Gastrocnemius medialis (tissue), 4 donors: ENCODE measurements at regions of chr17 and their contacts with region 1.

Region 1: DNA sequence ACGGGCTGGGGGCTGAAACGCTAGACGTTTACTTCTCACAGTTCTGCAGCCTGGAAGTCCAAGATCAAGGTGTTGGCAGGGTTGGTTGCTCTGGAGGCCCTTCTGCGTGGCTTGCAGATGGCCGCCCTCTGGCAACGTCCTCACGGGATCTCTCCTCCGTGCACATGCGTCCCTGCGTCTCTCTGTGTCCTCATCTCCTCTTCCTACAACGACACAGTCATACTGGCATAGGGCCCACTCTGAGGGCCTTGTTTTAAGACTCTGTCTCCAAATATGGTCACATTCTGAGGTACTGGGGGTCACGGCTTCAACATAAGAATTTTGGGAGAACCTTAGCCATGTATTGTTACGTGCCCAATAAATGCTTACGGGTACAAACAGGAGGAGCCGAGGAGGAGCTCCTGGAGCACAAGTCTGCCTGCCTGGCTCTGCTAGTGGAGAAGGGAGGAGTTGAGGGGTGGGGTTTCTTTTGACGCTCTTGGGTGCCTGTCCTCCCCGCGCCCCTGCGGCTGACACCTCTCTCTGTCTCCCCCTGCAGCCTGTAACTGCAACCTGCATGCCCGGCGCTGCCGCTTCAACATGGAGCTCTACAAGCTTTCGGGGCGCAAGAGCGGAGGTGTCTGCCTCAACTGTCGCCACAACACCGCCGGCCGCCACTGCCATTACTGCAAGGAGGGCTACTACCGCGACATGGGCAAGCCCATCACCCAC is 141.1 kb downstream of the NTN1 start:
- DNase-seq: peak in 1 of 2 donors; percentile 33
- ATAC-seq: no peak
- H3K4me3 ChIP-seq: no peak overlapping the region
- H3K27ac ChIP-seq: peak overlapping the region in 2 of 4 donors; percentile 58 to 72
- H3K4me1 ChIP-seq: no peaks in the 10 kb centered on the region
- H3K27me3 ChIP-seq: no peaks in the 10 kb centered on the region
- CTCF ChIP-seq: no peak
- POLR2A ChIP-seq: no peak

Region 2: GRCh38 chr17:9115446-9116191 is 46.8 kb before region 1 on chr17:
- in situ Hi-C with region 1: no loop called
- intact Hi-C with region 1: loop called (anchors 10 kb)
- DNase-seq: peak; percentile 17 to 33
- ATAC-seq: peak; percentile 55 to 85
- H3K4me3 ChIP-seq: peak overlapping the region; percentile 33 to 45 (median 34)
- H3K27ac ChIP-seq: peak overlapping the region; percentile 13 to 43 (median 28)
- H3K4me1 ChIP-seq: peaks cover 0 to 4% of the 10 kb centered on the region in 2 donors
- H3K27me3 ChIP-seq: peaks cover 0 to 5% (median 4%) of the 10 kb centered on the region in 3 donors
- CTCF ChIP-seq: peak in 2 of 5 experiments; percentile 25 to 29
- POLR2A ChIP-seq: no peak

Region 3: DNA sequence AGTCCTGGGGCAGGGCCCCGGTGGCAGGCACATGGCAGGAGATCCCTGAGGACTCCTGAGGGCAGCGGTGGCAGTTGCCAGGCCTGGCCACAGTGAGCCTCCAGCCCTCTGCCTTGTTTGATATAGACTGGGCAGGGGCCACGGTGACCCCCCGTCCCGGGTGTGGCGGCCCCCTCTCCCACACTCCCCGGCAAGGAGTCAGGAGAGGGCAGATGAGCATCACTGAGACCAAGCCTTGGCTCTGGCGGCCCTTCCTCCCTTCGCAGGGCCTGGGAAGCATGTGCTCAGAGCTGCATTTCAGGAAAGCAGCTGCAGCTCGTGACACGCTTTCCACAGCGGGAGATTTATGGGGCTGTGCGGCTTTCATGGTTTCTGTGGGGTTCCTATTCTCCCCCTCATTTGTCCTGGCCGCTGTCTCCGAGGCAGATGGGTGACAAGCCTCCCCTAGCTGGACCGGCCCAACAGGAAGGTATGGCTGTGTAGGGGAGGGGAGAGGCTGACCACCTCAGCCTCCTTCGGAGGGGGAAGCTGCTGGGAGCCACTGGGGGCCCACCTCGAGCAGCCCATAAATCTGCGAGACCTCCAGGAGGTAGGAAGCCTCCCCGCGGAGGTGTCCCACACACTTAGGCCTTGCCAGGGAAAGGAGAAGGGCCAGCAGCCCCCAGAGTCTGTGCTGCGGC is 70.3 kb after region 1 on chr17:
- in situ Hi-C with region 1: no loop called
- intact Hi-C with region 1: loop called (anchors 2 kb)
- DNase-seq: no peak
- ATAC-seq: no peak
- H3K4me3 ChIP-seq: no peak overlapping the region
- H3K27ac ChIP-seq: no peak overlapping the region
- H3K4me1 ChIP-seq: no peaks in the 10 kb centered on the region
- H3K27me3 ChIP-seq: no peaks in the 10 kb centered on the region
- CTCF ChIP-seq: no peak
- POLR2A ChIP-seq: no peak

Region 4: GRCh38 chr17:9432134-9432885 is 269.9 kb after region 1 on chr17:
- in situ Hi-C with region 1: no loop called
- intact Hi-C with region 1: no loop called
- DNase-seq: no peak
- ATAC-seq: peak; percentile 32 to 79
- H3K4me3 ChIP-seq: no peak overlapping the region
- H3K27ac ChIP-seq: peak overlapping the region; percentile 34 to 75 (median 51)
- H3K4me1 ChIP-seq: peaks cover 31 to 32% of the 10 kb centered on the region in 2 donors
- H3K27me3 ChIP-seq: no peaks in the 10 kb centered on the region
- CTCF ChIP-seq: no peak
- POLR2A ChIP-seq: no peak